Tibial artery (tissue), 4 donors: ENCODE measurements at regions of chr9 and their contacts with region 1.

Region 1: DNA sequence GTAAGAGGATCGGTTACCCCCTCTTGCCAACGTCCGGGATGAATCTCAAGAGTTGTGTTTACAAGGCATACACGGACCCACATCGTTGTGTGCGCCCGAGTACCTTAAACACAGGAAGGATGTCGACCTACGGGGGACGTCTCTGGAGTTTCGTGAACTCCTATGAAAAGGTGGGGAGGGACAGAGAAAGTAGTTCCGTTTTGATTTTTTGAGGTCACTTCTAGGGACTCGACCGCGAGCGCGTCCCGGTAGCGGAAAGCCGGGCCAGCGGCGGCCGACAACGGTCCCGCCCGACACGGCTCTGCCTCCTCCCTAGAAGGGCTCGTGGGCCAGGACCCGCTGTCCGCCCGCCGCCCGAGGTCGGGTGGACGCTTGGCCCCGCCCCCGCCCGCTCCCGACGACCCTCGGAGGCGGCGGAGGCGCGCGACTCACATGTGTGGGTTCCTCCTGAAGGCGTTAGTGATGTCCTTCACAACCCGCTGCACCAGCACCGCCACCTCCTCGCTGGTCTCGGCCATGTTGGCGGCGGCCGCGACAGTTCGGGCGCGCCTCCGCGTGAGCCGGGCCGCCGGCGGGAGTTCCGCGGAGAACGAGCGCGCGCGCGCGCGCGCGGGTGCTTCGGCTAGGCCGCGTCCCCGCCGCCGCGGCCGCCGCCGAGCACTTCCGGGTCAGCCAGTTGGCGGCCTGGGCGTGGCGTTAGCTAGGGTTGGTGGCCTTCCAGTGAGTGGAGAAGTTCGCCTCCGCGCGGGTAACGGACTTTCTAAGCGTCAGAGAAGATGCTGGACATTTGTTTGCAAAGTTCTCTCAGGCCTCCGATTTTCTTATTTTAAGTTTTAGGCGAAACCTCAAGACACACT is at the start of gene PTAR1:
- DNase-seq: peak; percentile 92 to 94
- H3K4me3 ChIP-seq: peak within 1 kb of the TSS; percentile 87 to 90
- H3K27ac ChIP-seq: peak within 1 kb of the TSS; percentile 96 to 98
- H3K4me1 ChIP-seq: peaks cover 0 to 30% (median 14%) of the 10 kb centered on the region in 4 donors
- H3K27me3 ChIP-seq: no peaks in the 10 kb centered on the region
- CTCF ChIP-seq: no peak

Region 2: DNA sequence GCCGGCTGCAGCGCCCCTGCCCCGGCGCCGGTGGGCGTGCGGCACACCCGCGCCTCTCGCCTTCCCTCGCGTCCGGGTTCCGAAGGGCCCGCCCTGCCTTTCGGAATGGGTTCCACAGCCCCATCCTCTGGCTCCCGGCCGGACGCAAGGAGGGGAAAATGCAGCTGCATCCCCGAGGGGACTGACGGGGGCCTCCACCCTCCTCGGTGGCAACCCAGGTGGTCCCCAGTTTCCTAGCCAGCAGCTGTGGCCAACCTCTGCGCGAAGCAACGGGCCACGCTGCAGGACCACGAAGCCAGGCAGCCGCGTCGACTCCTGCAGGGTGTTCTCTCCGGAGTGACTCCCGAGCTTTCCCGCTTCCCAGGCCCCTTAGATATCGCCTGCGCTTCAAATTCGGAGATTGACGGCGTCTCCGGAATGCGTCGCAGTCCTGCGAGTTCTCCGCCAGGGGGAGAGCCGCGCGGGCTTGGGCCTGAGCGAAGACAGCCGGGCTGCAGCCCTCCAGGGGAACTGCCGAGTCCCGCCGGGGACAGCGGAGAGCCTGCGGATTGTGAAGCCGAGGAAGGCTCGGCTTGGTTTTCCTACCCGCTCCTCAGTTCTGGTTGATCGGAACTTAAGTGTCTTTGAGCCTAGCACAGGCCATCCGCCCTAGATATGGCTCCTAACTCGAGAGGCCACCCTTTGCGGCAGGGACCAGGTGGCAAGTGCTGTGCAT is 86.9 kb before region 1 on chr9:
- intact Hi-C with region 1: loop called (anchors 5 kb)
- DNase-seq: peak; percentile 79 to 89
- H3K4me3 ChIP-seq: peak overlapping the region; percentile 68 to 74
- H3K27ac ChIP-seq: peak overlapping the region; percentile 74 to 78
- H3K4me1 ChIP-seq: peaks cover 0 to 24% (median 15%) of the 10 kb centered on the region in 4 donors
- H3K27me3 ChIP-seq: no peaks in the 10 kb centered on the region
- CTCF ChIP-seq: peak; percentile 81 to 87

Region 3: GRCh38 chr9:69829484-69829883 is 69.8 kb after region 1 on chr9:
- intact Hi-C with region 1: no loop called
- DNase-seq: no peak
- H3K4me3 ChIP-seq: no peak overlapping the region
- H3K27ac ChIP-seq: no peak overlapping the region
- H3K4me1 ChIP-seq: no peaks in the 10 kb centered on the region
- H3K27me3 ChIP-seq: no peaks in the 10 kb centered on the region
- CTCF ChIP-seq: no peak

Region 4: GRCh38 chr9:70258692-70259511 is 499.3 kb after region 1 on chr9 and contains the start of gene SMC5:
- intact Hi-C with region 1: loop called (anchors 10 kb)
- DNase-seq: peak; percentile 86 to 95
- H3K4me3 ChIP-seq: peak within 1 kb of the TSS; percentile 65 to 80
- H3K27ac ChIP-seq: peak within 1 kb of the TSS; percentile 93 to 96
- H3K4me1 ChIP-seq: peaks cover 0 to 69% (median 42%) of the 10 kb centered on the region in 4 donors
- H3K27me3 ChIP-seq: no peaks in the 10 kb centered on the region
- CTCF ChIP-seq: no peak